T-cell (primary cell): ENCODE measurements at regions of chr6 and their contacts with region 1.

Region 1: DNA sequence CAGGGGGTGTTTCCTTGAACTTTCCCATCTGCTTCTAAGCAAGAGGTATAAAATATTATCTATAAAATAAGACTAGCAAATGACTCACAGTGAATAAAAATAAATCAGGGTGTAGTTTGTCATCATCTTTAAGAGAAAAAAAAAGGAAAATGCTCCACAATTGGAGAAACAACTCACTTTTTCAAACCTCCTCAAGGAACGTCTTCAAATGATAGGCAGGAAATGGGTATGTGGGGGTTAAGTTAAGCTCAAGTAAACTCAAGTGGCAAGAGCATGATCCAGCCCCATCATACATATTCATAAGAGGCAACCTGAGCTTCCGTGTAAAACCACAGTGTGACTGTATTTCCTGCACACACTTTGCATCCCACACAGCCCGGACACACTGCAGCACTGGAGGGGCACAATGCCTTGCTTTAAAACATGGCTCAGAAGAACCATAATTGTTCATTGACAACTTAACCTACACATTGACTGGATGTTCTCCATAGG is 58.5 kb upstream of the CEP85L start:
- DNase-seq: peak; percentile 41 to 89 (median 65)
- ATAC-seq: peak; percentile 92 to 93 (median 92)
- H3K4me3 ChIP-seq: peak overlapping the region; percentile 74 to 80
- H3K4me3 Mint-ChIP-seq: peak overlapping the region; percentile 91 to 97 (median 96)
- H3K27ac ChIP-seq: peak overlapping the region; percentile 75
- H3K27ac Mint-ChIP-seq: peak overlapping the region; percentile 98
- H3K4me1 ChIP-seq: peaks cover 49 to 50% of the 10 kb centered on the region in 2 experiments
- H3K4me1 Mint-ChIP-seq: peaks cover 70 to 78% (median 78%) of the 10 kb centered on the region in 3 donors
- H3K27me3 ChIP-seq: no peaks in the 10 kb centered on the region
- H3K27me3 Mint-ChIP-seq: no peaks in the 10 kb centered on the region

Region 2: GRCh38 chr6:118651282-118652050 is 58.4 kb before region 1 on chr6 and contains the start of gene CEP85L:
- CTCF ChIA-PET with region 1: interaction called, 3 to 13 read pairs
- POLR2A ChIA-PET with region 1: interaction called, 3 to 4 read pairs
- DNase-seq: peak; percentile 75 to 94 (median 88)
- ATAC-seq: peak; percentile 91 to 94 (median 93)
- H3K4me3 ChIP-seq: peak within 1 kb of the TSS; percentile 74 to 81
- H3K4me3 Mint-ChIP-seq: peak within 1 kb of the TSS; percentile 78 to 92 (median 90)
- H3K27ac ChIP-seq: peak within 1 kb of the TSS; percentile 80
- H3K27ac Mint-ChIP-seq: peak within 1 kb of the TSS; percentile 87 to 92
- H3K4me1 ChIP-seq: peaks cover 29 to 33% of the 10 kb centered on the region in 2 experiments
- H3K4me1 Mint-ChIP-seq: peaks cover 49 to 61% (median 60%) of the 10 kb centered on the region in 3 donors
- H3K27me3 ChIP-seq: no peaks in the 10 kb centered on the region
- H3K27me3 Mint-ChIP-seq: no peaks in the 10 kb centered on the region
- total RNA-seq, gene CEP85L: 49.7 to 101 (median 53.5) TPM

Region 3: DNA sequence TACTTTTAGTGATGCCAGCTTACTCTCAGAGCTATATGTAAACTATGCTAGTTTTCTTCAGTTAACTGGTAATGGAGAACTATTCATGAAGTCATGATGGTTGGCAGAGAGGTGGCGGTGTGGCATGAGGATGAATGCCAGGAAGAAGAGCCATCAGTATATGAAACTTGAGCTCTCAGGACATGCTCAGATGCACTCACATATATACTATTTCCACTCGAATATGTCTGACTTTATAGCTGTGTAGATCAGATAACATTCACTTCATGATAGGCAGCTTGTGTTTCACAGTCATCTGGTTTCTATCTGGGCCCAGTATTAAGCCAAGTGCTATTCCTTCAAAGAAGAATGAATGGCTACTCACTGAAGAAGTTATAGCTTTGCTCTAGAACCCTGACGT is 12.4 kb before region 1 on chr6:
- CTCF ChIA-PET with region 1: interaction called, 14 to 37 read pairs
- POLR2A ChIA-PET with region 1: interaction called, 5 to 7 read pairs
- DNase-seq: peak in 8 of 35 experiments; percentile 7 to 44 (median 16)
- ATAC-seq: peak in 1 of 4 experiments; percentile 43
- H3K4me3 ChIP-seq: no peak overlapping the region
- H3K4me3 Mint-ChIP-seq: no peak overlapping the region
- H3K27ac ChIP-seq: no peak overlapping the region
- H3K27ac Mint-ChIP-seq: no peak overlapping the region
- H3K4me1 ChIP-seq: peaks cover 8 to 11% of the 10 kb centered on the region in 2 experiments
- H3K4me1 Mint-ChIP-seq: peaks cover 76 to 88% (median 88%) of the 10 kb centered on the region in 3 donors
- H3K27me3 ChIP-seq: no peaks in the 10 kb centered on the region
- H3K27me3 Mint-ChIP-seq: no peaks in the 10 kb centered on the region

Region 4: DNA sequence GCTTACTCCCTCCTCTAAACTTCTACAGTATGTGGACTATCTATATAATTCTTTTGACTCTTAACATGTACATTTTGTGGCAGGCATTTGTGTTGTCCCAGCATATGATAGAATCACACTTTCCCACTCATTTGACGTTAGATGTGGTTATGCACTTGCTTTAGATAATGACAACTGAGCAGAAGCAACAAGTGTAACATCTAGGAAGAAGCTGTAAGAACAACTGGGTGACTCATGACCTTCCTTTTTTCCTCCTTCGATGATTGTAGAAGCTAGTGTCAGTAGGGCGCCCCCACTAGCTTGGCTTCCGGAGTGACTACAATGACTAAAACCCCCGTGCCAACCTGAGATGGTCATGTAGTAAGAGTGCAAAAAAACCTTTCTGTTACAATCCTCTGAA is 16.0 kb after region 1 on chr6:
- CTCF ChIA-PET with region 1: interaction called, 9 to 15 read pairs
- POLR2A ChIA-PET with region 1: interaction called in 1 of 2 experiments, 7 read pairs
- DNase-seq: peak; percentile 12 to 69 (median 48)
- ATAC-seq: peak; percentile 89 to 93 (median 91)
- H3K4me3 ChIP-seq: no peak overlapping the region
- H3K4me3 Mint-ChIP-seq: peak overlapping the region; percentile 2 to 65 (median 29)
- H3K27ac ChIP-seq: peak overlapping the region; percentile 34
- H3K27ac Mint-ChIP-seq: peak overlapping the region; percentile 83 to 84
- H3K4me1 ChIP-seq: peaks cover 12 to 18% of the 10 kb centered on the region in 2 experiments
- H3K4me1 Mint-ChIP-seq: peaks cover 58 to 59% (median 59%) of the 10 kb centered on the region in 3 donors
- H3K27me3 ChIP-seq: no peaks in the 10 kb centered on the region
- H3K27me3 Mint-ChIP-seq: no peaks in the 10 kb centered on the region

Region 5: DNA sequence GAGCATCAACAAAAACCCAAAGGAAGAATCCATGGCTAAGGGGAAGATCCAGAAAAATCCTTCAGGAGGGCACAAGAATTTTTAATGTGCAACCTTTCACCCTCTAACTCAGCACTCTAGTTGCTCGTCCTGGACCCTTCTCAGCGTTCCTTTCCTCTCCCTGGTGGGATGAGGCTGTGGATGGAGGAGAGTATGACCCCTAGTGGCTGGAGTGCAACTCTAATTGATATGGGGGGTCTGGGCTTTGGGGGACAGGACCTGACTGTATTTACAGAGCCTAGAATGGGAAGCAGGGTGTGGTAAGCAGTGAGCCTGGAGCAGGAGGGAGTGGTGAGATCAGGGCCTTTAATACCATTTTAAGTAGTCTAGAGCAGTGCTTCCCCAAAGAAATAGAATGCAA is 25.4 kb after region 1 on chr6:
- CTCF ChIA-PET with region 1: interaction called, 3 read pairs
- POLR2A ChIA-PET with region 1: interaction called in 1 of 2 experiments, 11 read pairs
- DNase-seq: peak in 1 of 35 experiments; percentile 53
- ATAC-seq: peak in 2 of 4 experiments; percentile 42 to 45
- H3K4me3 ChIP-seq: no peak overlapping the region
- H3K4me3 Mint-ChIP-seq: no peak overlapping the region
- H3K27ac ChIP-seq: no peak overlapping the region
- H3K27ac Mint-ChIP-seq: no peak overlapping the region
- H3K4me1 ChIP-seq: peaks cover 0 to 4% of the 10 kb centered on the region in 2 experiments
- H3K4me1 Mint-ChIP-seq: peaks cover 14 to 31% (median 24%) of the 10 kb centered on the region in 3 donors
- H3K27me3 ChIP-seq: no peaks in the 10 kb centered on the region
- H3K27me3 Mint-ChIP-seq: no peaks in the 10 kb centered on the region